ENCODE measurements at regions of chr7 and their contacts with region 1.

Region 1: DNA sequence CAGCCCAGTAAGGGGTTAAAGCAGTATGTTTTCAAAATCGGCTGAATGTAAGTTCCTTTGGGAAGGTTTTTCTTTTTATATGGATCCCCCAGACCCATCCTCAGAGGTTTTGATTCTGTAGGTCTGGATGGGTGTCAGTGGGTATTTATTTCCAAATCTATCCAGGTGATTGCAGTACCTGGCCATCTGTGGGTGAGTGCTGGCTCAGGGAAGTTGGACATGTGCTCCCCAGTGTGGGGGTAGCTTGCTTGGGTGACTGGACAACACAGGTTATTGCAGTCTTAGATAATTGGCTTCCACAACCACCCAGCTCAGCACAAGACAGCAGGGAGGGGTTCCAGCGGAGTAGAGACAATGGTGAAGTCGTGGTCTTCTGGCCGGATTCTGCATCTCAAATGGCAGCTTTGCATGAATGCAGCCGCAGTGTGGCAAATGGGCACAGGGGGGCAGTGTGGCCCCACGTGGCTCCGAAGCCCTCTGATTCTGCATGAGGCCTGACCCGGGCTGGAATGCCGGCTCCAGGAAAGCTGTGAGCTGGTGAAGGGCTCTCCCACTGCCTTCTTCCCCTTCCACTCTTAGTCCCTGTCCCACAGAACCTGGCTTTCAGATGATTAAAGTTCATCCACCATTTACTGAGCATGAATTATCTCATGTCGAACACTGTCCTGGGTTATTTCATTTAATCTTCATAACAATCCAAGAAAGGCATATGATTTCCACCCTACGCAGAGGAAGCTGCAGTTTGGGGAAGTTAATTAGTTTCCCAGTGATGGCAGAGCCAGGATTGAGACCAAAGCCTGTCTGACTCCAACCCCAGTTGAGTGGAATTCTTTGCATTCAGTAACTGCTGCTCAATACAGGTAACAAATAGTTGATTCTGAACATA is 64.5 kb upstream of the SYPL1 start:
- DNase-seq: peak; percentile 93
- ATAC-seq: peak; percentile 63
- H3K4me3 ChIP-seq: no peak overlapping the region
- H3K27ac ChIP-seq: no peak overlapping the region
- H3K4me1 ChIP-seq: peaks cover 20% of the 10 kb centered on the region
- H3K27me3 ChIP-seq: no peaks in the 10 kb centered on the region
- CTCF ChIP-seq: peak; percentile 99

Region 2: DNA sequence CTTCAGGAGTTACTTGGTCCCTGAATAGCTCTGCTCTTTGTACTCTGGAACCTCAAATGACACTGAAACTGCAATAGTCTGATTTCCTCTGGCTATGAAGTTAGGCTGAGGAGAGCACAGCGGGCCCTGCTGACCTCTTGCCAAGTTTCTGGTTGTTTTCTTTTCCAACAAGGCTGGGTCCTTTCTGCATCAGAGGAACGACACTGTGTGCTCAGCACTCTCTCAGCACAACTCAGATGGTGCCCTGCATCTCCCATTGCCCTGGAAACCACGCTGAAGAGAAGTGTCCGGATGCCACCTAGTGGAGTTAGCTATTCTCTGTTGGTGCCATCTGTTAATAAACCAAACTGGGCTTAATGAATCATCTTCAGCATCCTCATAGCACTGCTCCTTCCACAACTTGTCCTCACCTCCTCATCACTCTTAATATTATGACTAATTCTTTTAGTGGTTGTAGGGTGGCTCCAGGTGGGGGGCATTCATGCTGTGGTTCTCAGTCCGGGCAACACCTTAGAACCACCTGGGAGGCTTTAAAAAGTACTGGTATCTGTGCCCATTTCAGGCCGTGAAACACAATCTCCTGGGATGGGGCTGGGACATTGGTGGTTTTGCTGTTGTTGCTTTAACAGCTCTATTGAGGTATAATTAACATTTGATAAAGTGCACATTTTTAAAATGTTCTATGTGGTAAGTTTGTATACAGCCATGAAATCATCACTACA is 587.1 kb before region 1 on chr7:
- CTCF ChIA-PET with region 1: interaction called, 6 read pairs
- POLR2A ChIA-PET with region 1: no interaction called
- intact Hi-C with region 1: loop called (anchors 2 kb)
- DNase-seq: peak; percentile 92
- ATAC-seq: peak; percentile 99
- H3K4me3 ChIP-seq: no peak overlapping the region
- H3K27ac ChIP-seq: no peak overlapping the region
- H3K4me1 ChIP-seq: no peaks in the 10 kb centered on the region
- H3K27me3 ChIP-seq: no peaks in the 10 kb centered on the region
- CTCF ChIP-seq: peak; percentile 95

Region 3: GRCh38 chr7:106260136-106260561 is 83.5 kb after region 1 on chr7:
- CTCF ChIA-PET with region 1: no interaction called
- POLR2A ChIA-PET with region 1: no interaction called
- intact Hi-C with region 1: loop called (anchors 5 kb)
- DNase-seq: no peak
- ATAC-seq: no peak
- H3K4me3 ChIP-seq: no peak overlapping the region
- H3K27ac ChIP-seq: no peak overlapping the region
- H3K4me1 ChIP-seq: no peaks in the 10 kb centered on the region
- H3K27me3 ChIP-seq: no peaks in the 10 kb centered on the region
- CTCF ChIP-seq: no peak

Region 4: GRCh38 chr7:106346678-106347217 is 170.1 kb after region 1 on chr7:
- CTCF ChIA-PET with region 1: no interaction called
- POLR2A ChIA-PET with region 1: interaction called, 3 read pairs
- intact Hi-C with region 1: loop called (anchors 5 kb)
- DNase-seq: peak; percentile 98
- ATAC-seq: peak; percentile 91
- H3K4me3 ChIP-seq: no peak overlapping the region
- H3K27ac ChIP-seq: peak overlapping the region; percentile 52
- H3K4me1 ChIP-seq: peaks cover 28% of the 10 kb centered on the region
- H3K27me3 ChIP-seq: no peaks in the 10 kb centered on the region
- CTCF ChIP-seq: no peak

Region 5: GRCh38 chr7:106542550-106543220 is 366.0 kb after region 1 on chr7:
- CTCF ChIA-PET with region 1: interaction called, 7 read pairs
- POLR2A ChIA-PET with region 1: no interaction called
- intact Hi-C with region 1: loop called (anchors 1 kb)
- DNase-seq: peak; percentile 85
- ATAC-seq: peak; percentile 87
- H3K4me3 ChIP-seq: no peak overlapping the region
- H3K27ac ChIP-seq: no peak overlapping the region
- H3K4me1 ChIP-seq: peaks cover 20% of the 10 kb centered on the region
- H3K27me3 ChIP-seq: no peaks in the 10 kb centered on the region
- CTCF ChIP-seq: peak; percentile 87

Region 6: DNA sequence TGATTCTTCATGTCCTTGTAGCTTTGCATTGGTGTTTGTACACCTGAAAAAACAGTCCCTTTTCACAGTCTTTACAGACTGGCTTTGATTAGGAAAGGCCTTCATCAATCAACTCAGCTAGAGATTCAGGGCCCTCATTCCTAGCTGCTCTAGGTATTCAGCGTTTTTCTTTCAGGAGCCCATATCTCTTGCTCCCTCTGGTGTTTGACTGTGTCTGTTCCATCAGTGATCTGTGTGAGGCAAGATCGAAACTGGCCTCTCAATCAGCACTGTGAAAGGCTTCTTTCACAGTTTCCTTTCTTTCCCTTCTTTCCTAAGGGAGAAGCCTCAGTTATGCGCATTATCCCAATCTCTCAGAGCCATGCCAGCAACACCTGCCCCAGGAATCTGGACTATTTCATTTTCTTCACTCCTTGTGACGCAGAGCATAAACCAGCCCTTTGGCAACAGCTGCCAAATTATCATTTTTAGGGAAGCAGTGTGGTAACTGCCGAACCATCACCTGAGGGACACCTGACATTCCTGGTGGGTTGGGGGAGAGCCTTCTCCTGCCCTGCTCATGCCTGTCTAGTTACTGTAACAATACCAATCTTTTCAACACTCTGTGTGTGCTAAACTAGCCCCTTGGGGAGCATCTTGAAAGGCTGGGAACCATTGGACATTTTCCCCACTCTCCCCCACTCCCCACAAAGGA is 560.0 kb after region 1 on chr7:
- CTCF ChIA-PET with region 1: interaction called, 11 read pairs
- POLR2A ChIA-PET with region 1: no interaction called
- intact Hi-C with region 1: no loop called
- DNase-seq: peak; percentile 72
- ATAC-seq: peak; percentile 97
- H3K4me3 ChIP-seq: no peak overlapping the region
- H3K27ac ChIP-seq: no peak overlapping the region
- H3K4me1 ChIP-seq: no peaks in the 10 kb centered on the region
- H3K27me3 ChIP-seq: no peaks in the 10 kb centered on the region
- CTCF ChIP-seq: peak; percentile 73

Region 7: DNA sequence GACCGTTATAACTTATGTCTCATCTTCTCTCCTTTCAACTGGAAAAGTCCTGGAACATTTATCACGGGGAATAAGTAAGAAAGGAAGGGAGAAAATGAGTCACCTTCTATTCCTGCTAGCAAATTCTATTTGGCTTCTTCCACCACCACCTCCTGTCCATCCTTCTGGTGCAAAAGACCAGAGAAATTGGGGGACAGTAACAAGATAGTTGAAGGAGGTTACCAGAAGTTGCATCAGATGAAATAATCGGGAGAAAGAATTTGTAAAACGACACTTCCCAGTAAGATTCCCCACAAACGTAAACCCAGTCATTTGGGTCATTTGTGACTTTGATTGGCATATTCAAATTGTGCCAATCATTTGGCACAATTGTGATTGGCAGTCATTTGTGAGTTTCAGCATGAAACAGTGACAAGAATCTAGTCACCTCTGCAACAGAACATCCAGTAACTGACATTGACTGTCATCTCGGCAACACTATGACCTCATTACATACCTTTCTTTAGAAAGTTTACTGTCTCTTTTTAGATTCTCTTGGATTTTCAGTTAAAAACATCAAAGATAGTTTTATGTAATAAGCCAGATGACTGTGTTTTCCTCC is 637.1 kb after region 1 on chr7:
- CTCF ChIA-PET with region 1: no interaction called
- POLR2A ChIA-PET with region 1: no interaction called
- intact Hi-C with region 1: no loop called
- DNase-seq: no peak
- ATAC-seq: no peak
- H3K4me3 ChIP-seq: no peak overlapping the region
- H3K27ac ChIP-seq: no peak overlapping the region
- H3K4me1 ChIP-seq: no peaks in the 10 kb centered on the region
- H3K27me3 ChIP-seq: no peaks in the 10 kb centered on the region
- CTCF ChIP-seq: no peak